Gastrocnemius medialis (tissue), 4 donors: ENCODE measurements at regions of chr22 and their contacts with region 1.

Region 1: DNA sequence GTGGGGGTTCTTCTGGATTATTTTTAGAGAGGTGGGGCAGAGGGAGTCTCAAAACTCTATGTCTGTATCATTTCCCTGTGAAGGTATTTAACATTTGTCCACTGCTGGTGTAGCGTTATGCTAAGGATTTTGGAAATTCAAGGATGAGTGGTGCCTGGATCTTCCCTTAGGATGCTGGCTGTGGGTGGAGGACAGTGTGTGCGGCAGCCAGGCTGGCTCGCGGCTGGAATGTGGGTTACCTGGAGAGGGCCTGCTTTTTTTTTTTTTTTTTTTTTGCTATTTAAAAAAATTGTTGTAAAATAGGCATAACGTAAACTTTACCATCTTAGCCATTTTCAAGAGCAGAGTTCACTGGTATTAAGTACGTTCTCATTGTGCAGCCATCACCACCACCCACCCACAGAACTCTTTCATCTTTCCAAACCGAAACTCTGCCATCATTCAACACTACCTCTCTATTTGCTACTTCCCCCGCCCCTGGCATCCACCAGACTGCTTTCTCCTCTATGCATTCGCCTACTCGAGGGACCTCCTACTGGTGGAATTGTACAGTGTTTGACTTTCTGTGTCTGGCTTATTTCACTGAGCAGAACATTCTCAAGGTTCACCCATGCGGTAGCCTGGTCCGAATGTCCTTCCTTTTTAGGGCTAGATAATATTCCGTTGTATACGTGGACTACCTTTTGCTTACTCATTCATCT is 67.1 kb downstream of the PARVB start:
- DNase-seq: no peak
- ATAC-seq: no peak
- H3K4me3 ChIP-seq: peak overlapping the region in 1 of 4 donors; percentile 10
- H3K27ac ChIP-seq: peak overlapping the region in 3 of 4 donors; percentile 88 to 96 (median 89)
- H3K4me1 ChIP-seq: peaks cover 37 to 48% of the 10 kb centered on the region in 2 donors
- H3K27me3 ChIP-seq: no peaks in the 10 kb centered on the region
- CTCF ChIP-seq: peak in 1 of 5 experiments; percentile 17
- POLR2A ChIP-seq: no peak

Region 2: DNA sequence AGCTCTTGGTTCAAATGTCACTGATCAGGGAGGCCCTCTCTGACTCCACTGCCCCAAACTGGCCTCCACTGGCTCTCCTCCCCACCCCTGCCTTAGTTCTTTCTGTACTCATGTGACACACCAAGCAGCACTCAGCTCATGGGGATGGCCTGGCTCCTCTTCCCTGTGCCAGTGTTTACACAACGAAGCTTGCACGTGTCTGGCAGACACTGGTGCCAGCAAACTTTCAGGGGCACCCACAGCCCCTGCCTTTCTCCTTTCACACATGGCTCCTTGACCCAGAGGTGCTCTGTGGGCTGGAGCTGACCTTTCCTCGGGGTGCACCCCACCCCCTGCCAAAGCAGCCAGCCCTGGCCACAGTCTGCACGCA is 51.9 kb after region 1 on chr22:
- in situ Hi-C with region 1: no loop called
- intact Hi-C with region 1: loop called (anchors 5 kb)
- DNase-seq: no peak
- ATAC-seq: peak in 1 of 2 donors; percentile 33
- H3K4me3 ChIP-seq: no peak overlapping the region
- H3K27ac ChIP-seq: no peak overlapping the region
- H3K4me1 ChIP-seq: peaks cover 0 to 3% of the 10 kb centered on the region in 2 donors
- H3K27me3 ChIP-seq: no peaks in the 10 kb centered on the region
- CTCF ChIP-seq: no peak
- POLR2A ChIP-seq: no peak